Posterior vena cava (tissue), 2 donors: ENCODE measurements at regions of chr7 and their contacts with region 1.

Region 1: DNA sequence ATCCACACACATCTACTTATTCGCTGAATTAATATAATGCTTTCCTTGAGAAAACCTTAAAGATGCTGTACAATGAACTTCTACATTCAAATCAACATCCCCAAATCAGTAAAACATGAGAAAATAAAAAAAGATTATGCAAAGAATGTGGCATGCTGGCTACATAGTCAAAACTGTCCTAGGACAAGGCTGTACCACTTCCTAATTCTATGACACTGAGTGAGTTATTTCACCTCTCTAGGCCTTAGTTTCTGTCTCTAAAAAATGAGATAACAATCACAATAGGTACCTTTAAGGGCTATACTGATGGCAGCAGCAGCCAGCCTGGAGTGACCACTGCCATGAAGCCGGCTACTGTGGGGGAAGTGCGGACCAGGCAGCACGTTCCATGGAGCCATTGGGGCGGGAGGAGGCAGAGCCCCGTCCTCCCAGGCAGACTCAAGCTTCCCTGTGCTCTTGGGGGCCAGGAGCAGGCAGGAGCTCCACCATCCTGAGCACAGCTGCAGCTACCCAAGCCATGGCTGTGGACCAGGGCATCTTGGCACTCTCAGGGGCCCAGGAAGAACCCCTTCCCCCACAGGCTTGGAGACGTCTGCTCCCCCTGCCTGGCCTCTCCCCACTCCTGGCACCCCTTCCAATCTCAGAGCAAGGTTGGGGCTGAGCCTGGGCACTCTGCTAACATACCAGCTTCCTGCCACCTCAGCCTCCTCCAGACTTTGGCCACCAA is 110.2 kb downstream of the ELAPOR2 start:
- DNase-seq: no peak

Region 2: GRCh38 chr7:87027900-87028299 is 78.7 kb after region 1 on chr7:
- intact Hi-C with region 1: no loop called
- DNase-seq: no peak

Region 3: DNA sequence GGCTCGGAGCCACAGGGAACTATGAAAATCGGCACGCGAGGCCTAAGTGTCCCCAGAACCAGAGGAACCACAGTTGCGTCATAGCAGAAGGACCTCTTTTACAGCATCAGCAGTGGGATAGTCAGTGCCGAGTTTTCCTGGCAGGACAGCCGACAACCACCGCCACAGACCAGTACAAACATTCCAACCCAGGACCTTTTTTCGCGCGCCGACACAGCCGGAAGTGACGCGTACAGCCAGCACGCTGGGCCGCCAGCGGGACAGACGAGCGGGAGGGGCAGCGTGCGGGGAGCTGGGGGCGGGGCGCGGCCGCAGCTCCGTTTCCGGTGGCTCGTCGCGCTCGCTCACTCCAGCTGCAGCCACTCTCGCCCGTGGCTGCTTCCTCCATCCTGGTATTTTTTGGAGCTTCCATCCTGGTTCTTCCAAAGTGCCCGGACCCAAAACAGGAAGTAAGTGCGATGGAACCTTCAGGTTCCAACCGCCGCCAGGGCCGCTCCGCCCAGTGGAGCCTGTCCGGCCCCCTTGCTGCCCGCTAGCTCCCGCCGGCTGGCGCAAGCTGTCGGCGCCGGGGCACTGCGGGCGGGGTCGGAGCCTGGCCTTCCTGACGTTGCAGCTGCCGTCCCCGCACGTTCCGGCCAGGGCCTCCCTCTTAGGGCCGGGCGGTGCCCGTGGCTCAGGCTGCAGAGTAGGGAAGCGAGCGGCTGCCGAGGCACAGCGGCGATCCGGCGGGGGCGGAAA is 203.1 kb after region 1 on chr7 and contains the start of gene DMTF1:
- intact Hi-C with region 1: loop called in 1 of 2 experiments (anchors 10 kb)
- DNase-seq: peak; percentile 99
- total RNA-seq, gene DMTF1: 57.7 to 63.6 TPM

Region 4: GRCh38 chr7:87218796-87219544 is 269.8 kb after region 1 on chr7:
- intact Hi-C with region 1: no loop called
- DNase-seq: peak; percentile 90

Region 5: DNA sequence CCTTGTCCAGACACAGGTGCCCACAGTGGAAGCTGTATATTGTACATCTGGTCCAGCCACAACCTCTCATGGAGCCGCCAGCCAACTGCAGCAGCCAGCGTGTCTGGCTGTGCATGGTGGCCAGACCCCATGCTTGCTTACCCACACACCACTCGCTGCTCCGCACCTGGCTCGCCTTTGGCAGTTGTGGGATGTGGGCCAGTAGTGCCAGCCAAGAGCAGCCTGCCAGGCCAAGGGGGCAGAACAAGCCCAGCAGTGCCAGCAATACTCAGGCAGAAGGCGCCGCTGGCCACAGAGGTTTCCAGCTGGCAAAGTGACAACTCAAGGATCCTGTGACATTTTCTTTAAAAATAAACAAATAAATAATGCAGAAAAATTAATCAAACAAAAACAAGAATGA is 282.0 kb after region 1 on chr7:
- intact Hi-C with region 1: loop called in 1 of 2 experiments (anchors 10 kb)
- DNase-seq: no peak